T-cell (primary cell): ENCODE measurements at regions of chr15 and their contacts with region 1.

Region 1: DNA sequence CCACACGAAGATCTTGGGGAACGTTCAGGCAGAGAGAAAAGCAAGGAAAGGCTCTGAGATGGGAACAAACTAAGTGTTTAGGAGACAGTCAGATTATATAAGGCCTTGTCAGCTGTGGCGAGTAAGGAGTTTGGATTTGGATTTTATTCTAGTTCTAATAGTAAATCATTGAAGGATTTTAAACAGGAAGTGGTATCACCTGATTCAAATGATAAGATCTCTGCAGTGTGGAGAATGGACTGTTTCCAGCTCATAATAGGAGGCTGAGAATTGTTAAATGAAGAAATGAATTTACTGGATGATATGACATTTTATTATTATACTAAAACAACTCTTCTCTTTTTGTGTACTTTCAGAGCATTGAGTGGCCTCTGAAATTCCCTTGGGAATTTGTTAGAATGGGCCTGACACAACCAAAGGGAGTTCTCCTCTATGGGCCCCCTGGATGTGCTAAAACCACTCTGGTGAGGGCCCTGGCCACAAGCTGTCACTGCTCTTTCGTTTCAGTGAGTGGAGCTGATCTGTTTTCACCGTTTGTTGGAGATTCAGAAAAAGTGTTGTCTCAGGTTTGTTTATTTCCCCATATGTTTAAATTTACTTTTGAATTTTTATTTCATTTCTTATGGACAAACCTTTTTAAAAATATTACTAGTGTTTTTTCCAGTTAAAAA is 36.0 kb upstream of the GATM start:
- DNase-seq: no peak
- ATAC-seq: peak in 1 of 4 experiments; percentile 43
- H3K4me3 ChIP-seq: no peak overlapping the region
- H3K4me3 Mint-ChIP-seq: peak overlapping the region in 1 of 3 donors; percentile 4
- H3K27ac ChIP-seq: no peak overlapping the region
- H3K27ac Mint-ChIP-seq: peak overlapping the region; percentile 47 to 71
- H3K4me1 ChIP-seq: peaks cover 4 to 8% of the 10 kb centered on the region in 2 experiments
- H3K4me1 Mint-ChIP-seq: peaks cover 18 to 22% (median 20%) of the 10 kb centered on the region in 3 donors
- H3K27me3 ChIP-seq: no peaks in the 10 kb centered on the region
- H3K27me3 Mint-ChIP-seq: no peaks in the 10 kb centered on the region

Region 2: DNA sequence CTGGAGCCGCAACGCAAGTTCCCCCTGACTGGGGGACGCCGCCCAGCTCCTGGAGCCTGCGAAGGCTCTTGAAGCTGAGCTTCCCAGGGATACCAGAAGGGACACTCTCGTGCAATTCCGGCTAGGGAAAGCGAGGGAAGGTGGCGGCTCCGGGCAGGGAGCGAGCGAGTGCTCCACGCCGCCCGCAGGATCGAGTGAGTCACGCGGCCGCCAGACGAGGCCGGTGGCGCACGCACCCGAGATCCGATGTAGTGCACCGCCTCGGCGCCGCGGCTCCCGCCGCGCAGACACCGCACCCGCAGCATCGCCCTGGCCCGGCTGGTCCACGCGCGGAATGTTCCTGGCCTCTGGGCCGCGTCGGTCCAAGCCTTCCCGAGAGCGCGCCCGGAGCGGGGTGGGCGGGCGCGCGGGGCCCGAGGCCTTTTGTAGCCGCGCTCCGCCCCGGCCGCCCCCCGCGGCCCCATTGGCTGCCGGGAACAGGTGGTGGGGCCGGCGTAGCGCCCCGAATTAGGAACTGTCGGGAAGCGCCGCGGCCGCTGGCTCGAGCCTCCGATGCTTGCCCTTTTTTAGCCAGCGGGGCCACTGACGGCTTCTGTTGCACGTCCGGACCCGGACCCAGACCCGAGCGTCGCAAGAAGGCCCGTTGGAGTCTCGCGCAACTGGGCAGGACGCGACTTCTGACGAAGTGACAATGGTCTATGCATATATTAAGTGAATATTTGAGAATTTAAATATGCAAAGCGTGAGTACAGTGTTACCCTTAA is 36.0 kb before region 1 on chr15 and contains the start of gene GATM:
- CTCF ChIA-PET with region 1: interaction called in 1 of 2 experiments, 5 read pairs
- POLR2A ChIA-PET with region 1: interaction called in 1 of 2 experiments, 10 read pairs
- DNase-seq: peak in 22 of 35 experiments; percentile 4 to 46 (median 18)
- ATAC-seq: peak; percentile 78 to 86 (median 84)
- H3K4me3 ChIP-seq: peak within 1 kb of the TSS; percentile 44 to 75
- H3K4me3 Mint-ChIP-seq: peak within 1 kb of the TSS; percentile 73 to 82 (median 76)
- H3K27ac ChIP-seq: no peak within 1 kb of the TSS
- H3K27ac Mint-ChIP-seq: no peak within 1 kb of the TSS
- H3K4me1 ChIP-seq: peaks cover 2 to 15% of the 10 kb centered on the region in 2 experiments
- H3K4me1 Mint-ChIP-seq: peaks cover 20 to 25% (median 22%) of the 10 kb centered on the region in 3 donors
- H3K27me3 ChIP-seq: peaks cover 0 to 29% of the 10 kb centered on the region in 2 experiments
- H3K27me3 Mint-ChIP-seq: peaks cover 59% of the 10 kb centered on the region in 2 donors
- total RNA-seq, gene GATM: 0.49 to 5.5 (median 2.0) TPM